Motor neuron (in vitro differentiated cells): ENCODE measurements at regions of chr4 and their contacts with region 1.

Region 1: DNA sequence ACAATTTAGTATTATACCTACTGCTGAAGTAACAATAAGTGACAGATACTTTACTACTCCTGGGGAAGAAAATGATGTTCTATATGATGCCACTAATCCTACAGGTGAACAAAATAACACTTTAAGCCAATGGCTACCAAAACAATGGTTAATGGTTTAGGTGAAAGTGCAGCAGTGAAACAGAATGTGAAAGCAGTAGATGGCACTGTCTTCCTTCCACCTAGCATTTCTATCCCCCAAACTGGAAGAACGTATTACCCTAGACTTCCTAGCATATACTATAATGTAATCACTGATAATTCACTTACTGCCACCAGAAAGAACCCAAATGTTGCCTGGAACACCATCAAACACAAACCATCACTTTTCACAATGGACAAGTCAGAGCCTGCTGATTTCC is 18.9 kb upstream of the CABS1 start:
- ATAC-seq: no peak
- H3K4me3 ChIP-seq: no peak overlapping the region
- H3K27ac ChIP-seq: no peak overlapping the region
- H3K4me1 ChIP-seq: no peaks in the 10 kb centered on the region

Region 2: GRCh38 chr4:70496231-70496630 is 180.3 kb after region 1 on chr4:
- in situ Hi-C with region 1: loop called in 1 of 9 experiments (anchors 25 kb)
- ATAC-seq: no peak
- H3K4me3 ChIP-seq: no peak overlapping the region
- H3K27ac ChIP-seq: no peak overlapping the region
- H3K4me1 ChIP-seq: no peaks in the 10 kb centered on the region